Activated CD4-positive, alpha-beta memory T cell treated with anti-CD3 and anti-CD28 coated beads for 36 hours (primary cell): ENCODE measurements at regions of chr19 and their contacts with region 1.

Region 1: GRCh38 chr19:57527136-57527881 is at the start of gene ZNF549:
- DNase-seq: peak; percentile 94
- H3K4me3 Mint-ChIP-seq: peak within 1 kb of the TSS; percentile 85
- H3K27ac Mint-ChIP-seq: peak within 1 kb of the TSS; percentile 54
- H3K4me1 Mint-ChIP-seq: peaks cover 18% of the 10 kb centered on the region
- H3K27me3 Mint-ChIP-seq: no peaks in the 10 kb centered on the region
- total RNA-seq, gene ZNF549: 2.9 to 3.4 TPM

Region 2: GRCh38 chr19:57350877-57351805 is 176.2 kb before region 1 on chr19 and contains the start of gene ZNF304:
- CTCF ChIA-PET with region 1: no interaction called
- POLR2A ChIA-PET with region 1: no interaction called
- intact Hi-C with region 1: no loop called
- DNase-seq: peak; percentile 91
- H3K4me3 Mint-ChIP-seq: peak within 1 kb of the TSS; percentile 90
- H3K27ac Mint-ChIP-seq: peak within 1 kb of the TSS; percentile 68
- H3K4me1 Mint-ChIP-seq: peaks cover 25% of the 10 kb centered on the region
- H3K27me3 Mint-ChIP-seq: peaks cover 5% of the 10 kb centered on the region
- total RNA-seq, gene ZNF304: 3.8 to 4.0 TPM

Region 3: GRCh38 chr19:57512845-57513244 is 14.5 kb before region 1 on chr19:
- CTCF ChIA-PET with region 1: interaction called, 5 read pairs
- POLR2A ChIA-PET with region 1: no interaction called
- intact Hi-C with region 1: loop called (anchors 1 kb)
- DNase-seq: no peak
- H3K4me3 Mint-ChIP-seq: no peak overlapping the region
- H3K27ac Mint-ChIP-seq: no peak overlapping the region
- H3K4me1 Mint-ChIP-seq: no peaks in the 10 kb centered on the region
- H3K27me3 Mint-ChIP-seq: no peaks in the 10 kb centered on the region